ENCODE measurements at regions of chr12 and their contacts with region 1.

Region 1: GRCh38 chr12:27802511-27802910 is 22.5 kb upstream of the MANSC4 start:
- DNase-seq: peak; percentile 29
- ATAC-seq: peak; percentile 71
- H3K4me3 Mint-ChIP-seq: no peak overlapping the region
- H3K27ac Mint-ChIP-seq: no peak overlapping the region
- H3K4me1 Mint-ChIP-seq: peaks cover 50% of the 10 kb centered on the region
- H3K27me3 Mint-ChIP-seq: peaks cover 13% of the 10 kb centered on the region

Region 2: DNA sequence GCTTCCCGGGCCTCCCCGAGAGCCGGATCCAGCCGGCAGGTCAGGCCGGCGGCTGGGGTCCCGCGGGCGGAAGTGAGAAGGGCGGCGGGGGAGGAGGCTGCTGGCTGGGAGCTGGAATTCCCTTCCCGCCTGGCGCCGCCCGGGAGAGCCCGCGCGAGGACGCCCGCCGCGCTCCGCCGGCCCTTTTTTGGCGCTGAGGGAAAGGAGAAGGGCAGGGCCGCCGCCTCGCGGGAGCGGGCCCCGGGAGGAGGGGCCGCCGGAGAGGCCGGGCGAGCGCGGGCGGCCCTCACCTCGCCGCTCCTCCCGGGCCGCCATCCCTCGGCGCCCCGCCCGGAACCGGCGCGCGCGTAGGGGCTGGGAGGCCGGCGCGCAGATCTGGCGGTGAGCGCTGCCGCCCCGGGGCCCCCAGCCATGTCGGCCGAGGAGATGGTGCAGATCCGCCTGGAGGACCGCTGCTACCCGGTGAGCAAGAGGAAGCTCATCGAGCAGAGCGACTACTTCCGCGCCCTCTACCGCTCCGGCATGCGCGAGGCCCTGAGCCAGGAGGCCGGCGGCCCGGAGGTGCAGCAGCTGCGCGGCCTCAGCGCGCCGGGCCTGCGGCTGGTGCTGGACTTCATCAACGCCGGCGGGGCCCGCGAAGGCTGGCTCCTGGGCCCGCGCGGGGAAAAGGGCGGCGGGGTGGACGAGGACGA is 22.4 kb before region 1 on chr12 and contains the starts of genes KLHL42 and MANSC4:
- CTCF ChIA-PET with region 1: no interaction called
- POLR2A ChIA-PET with region 1: no interaction called
- intact Hi-C with region 1: loop called in 1 of 2 experiments (anchors 1 kb)
- DNase-seq: peak; percentile 80
- ATAC-seq: peak; percentile 86
- H3K4me3 Mint-ChIP-seq: peak within 1 kb of the TSS; percentile 80
- H3K27ac Mint-ChIP-seq: peak within 1 kb of the TSS; percentile 83
- H3K4me1 Mint-ChIP-seq: peaks cover 34% of the 10 kb centered on the region
- H3K27me3 Mint-ChIP-seq: no peaks in the 10 kb centered on the region
- total RNA-seq, gene KLHL42: 7.1 to 9.2 TPM
- total RNA-seq, gene MANSC4: not detected

Region 3: GRCh38 chr12:27785882-27786570 is 16.5 kb before region 1 on chr12:
- CTCF ChIA-PET with region 1: interaction called, 4 read pairs
- POLR2A ChIA-PET with region 1: no interaction called
- intact Hi-C with region 1: loop called in 1 of 2 experiments (anchors 1 kb)
- DNase-seq: no peak
- ATAC-seq: peak; percentile 82
- H3K4me3 Mint-ChIP-seq: no peak overlapping the region
- H3K27ac Mint-ChIP-seq: no peak overlapping the region
- H3K4me1 Mint-ChIP-seq: peaks cover 40% of the 10 kb centered on the region
- H3K27me3 Mint-ChIP-seq: no peaks in the 10 kb centered on the region